ENCODE measurements at regions of chr20 and their contacts with region 1.

Region 1: GRCh38 chr20:35541783-35542588 is at the start of gene ERGIC3:
- DNase-seq: peak; percentile 98
- ATAC-seq: peak; percentile 93
- H3K4me3 ChIP-seq: peak within 1 kb of the TSS; percentile 55 to 94 (median 87)
- H3K4me3 Mint-ChIP-seq: peak within 1 kb of the TSS; percentile 94
- H3K27ac ChIP-seq: peak within 1 kb of the TSS; percentile 63 to 82
- H3K27ac Mint-ChIP-seq: peak within 1 kb of the TSS; percentile 94
- H3K4me1 ChIP-seq: peaks cover 9 to 18% of the 10 kb centered on the region in 2 donors
- H3K4me1 Mint-ChIP-seq: peaks cover 26% of the 10 kb centered on the region
- H3K27me3 ChIP-seq: no peaks in the 10 kb centered on the region
- H3K27me3 Mint-ChIP-seq: no peaks in the 10 kb centered on the region
- CTCF ChIP-seq: no peak
- total RNA-seq, gene ERGIC3: 167 and 191 TPM in 2 replicates

Region 2: DNA sequence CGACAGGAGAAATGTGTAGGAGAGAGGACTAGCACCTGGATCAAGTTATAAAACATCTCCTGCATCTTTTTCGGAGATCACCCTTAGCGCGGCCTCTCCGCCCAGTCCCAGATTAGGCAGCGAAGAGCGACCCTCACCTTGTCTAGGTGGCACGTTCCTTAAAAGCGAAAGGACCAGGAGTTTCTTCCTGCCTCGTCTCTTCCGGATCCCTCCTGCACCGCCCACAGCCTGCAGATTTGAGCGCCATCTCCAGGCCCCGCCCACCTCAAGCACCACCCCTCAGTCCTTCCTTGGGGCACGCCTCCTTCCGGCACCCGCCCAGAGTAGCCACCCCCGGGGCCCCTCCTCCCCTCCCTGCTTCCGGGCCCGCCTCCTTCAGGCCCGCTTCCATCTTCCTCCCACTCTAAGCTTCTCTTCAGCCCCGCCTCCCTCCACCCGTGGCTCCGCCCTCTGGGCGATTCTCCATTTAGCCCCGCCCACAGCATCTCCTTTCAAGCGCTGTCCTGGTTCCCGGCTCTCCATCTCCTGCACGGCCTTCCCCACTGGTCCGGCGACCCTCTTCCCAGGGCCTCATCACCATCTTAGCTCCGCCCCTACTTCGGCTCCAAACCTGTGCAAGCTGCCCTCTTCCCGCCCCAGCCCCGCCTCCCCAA is 1548.9 kb before region 1 on chr20:
- CTCF ChIA-PET with region 1: no interaction called
- POLR2A ChIA-PET with region 1: no interaction called
- intact Hi-C with region 1: loop called (anchors 5 kb)
- DNase-seq: peak; percentile 99
- ATAC-seq: peak; percentile 84
- H3K4me3 ChIP-seq: peak overlapping the region; percentile 94 to 99 (median 98)
- H3K4me3 Mint-ChIP-seq: peak overlapping the region; percentile 92
- H3K27ac ChIP-seq: peak overlapping the region; percentile 90 to 91
- H3K27ac Mint-ChIP-seq: peak overlapping the region; percentile 99
- H3K4me1 ChIP-seq: peaks cover 40 to 48% of the 10 kb centered on the region in 2 donors
- H3K4me1 Mint-ChIP-seq: peaks cover 59% of the 10 kb centered on the region
- H3K27me3 ChIP-seq: no peaks in the 10 kb centered on the region
- H3K27me3 Mint-ChIP-seq: no peaks in the 10 kb centered on the region
- CTCF ChIP-seq: no peak

Region 3: DNA sequence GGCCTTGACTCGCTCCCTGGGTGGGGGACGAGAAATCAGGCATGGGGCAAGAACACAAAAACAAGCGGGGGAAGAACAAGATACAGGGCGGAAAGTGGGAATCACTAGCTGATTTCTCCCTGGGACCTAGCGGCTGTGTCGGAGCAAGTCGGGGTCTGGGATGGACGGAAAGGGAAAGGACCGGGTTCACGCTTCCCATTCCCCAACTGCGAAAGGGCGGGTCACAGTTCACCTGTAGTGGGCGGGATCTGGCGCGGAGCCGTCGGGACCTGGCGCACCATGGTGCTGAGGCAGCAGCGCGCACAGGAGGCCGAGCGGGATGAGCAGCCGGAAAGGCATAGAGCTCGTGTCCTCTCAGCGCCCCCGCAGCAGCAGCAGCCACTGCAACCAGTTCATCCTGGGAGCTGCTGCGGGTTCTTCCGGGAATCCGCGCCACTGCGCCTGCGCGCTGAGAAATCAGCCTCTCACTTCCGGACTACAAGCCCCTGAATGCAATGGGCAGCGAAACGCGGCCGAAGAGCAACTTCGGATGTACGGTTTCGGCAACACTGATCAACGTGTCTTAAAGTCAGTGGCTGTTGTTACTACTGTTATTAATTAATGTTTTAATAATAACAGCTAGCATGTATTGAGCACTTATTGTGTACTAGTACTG is 394.9 kb before region 1 on chr20 and contains the start of gene EDEM2:
- CTCF ChIA-PET with region 1: no interaction called
- POLR2A ChIA-PET with region 1: no interaction called
- intact Hi-C with region 1: loop called (anchors 5 kb)
- DNase-seq: peak; percentile 95
- ATAC-seq: peak; percentile 80
- H3K4me3 ChIP-seq: peak within 1 kb of the TSS; percentile 69 to 94 (median 90)
- H3K4me3 Mint-ChIP-seq: peak within 1 kb of the TSS; percentile 96
- H3K27ac ChIP-seq: peak within 1 kb of the TSS; percentile 79 to 89
- H3K27ac Mint-ChIP-seq: peak within 1 kb of the TSS; percentile 94
- H3K4me1 ChIP-seq: peaks cover 33 to 43% of the 10 kb centered on the region in 2 donors
- H3K4me1 Mint-ChIP-seq: peaks cover 36% of the 10 kb centered on the region
- H3K27me3 ChIP-seq: no peaks in the 10 kb centered on the region
- H3K27me3 Mint-ChIP-seq: no peaks in the 10 kb centered on the region
- CTCF ChIP-seq: no peak
- total RNA-seq, gene EDEM2: 28.1 and 28.6 TPM in 2 replicates

Region 4: GRCh38 chr20:35443003-35443402 is 99.0 kb before region 1 on chr20:
- CTCF ChIA-PET with region 1: no interaction called
- POLR2A ChIA-PET with region 1: no interaction called
- intact Hi-C with region 1: no loop called
- DNase-seq: no peak
- ATAC-seq: no peak
- H3K4me3 ChIP-seq: no peak overlapping the region
- H3K4me3 Mint-ChIP-seq: no peak overlapping the region
- H3K27ac ChIP-seq: no peak overlapping the region
- H3K27ac Mint-ChIP-seq: no peak overlapping the region
- H3K4me1 ChIP-seq: peaks cover 4 to 9% of the 10 kb centered on the region in 2 donors
- H3K4me1 Mint-ChIP-seq: peaks cover 8% of the 10 kb centered on the region
- H3K27me3 ChIP-seq: peaks cover 0 to 8% (median 4%) of the 10 kb centered on the region in 4 experiments
- H3K27me3 Mint-ChIP-seq: peaks cover 21% of the 10 kb centered on the region
- CTCF ChIP-seq: no peak

Region 5: DNA sequence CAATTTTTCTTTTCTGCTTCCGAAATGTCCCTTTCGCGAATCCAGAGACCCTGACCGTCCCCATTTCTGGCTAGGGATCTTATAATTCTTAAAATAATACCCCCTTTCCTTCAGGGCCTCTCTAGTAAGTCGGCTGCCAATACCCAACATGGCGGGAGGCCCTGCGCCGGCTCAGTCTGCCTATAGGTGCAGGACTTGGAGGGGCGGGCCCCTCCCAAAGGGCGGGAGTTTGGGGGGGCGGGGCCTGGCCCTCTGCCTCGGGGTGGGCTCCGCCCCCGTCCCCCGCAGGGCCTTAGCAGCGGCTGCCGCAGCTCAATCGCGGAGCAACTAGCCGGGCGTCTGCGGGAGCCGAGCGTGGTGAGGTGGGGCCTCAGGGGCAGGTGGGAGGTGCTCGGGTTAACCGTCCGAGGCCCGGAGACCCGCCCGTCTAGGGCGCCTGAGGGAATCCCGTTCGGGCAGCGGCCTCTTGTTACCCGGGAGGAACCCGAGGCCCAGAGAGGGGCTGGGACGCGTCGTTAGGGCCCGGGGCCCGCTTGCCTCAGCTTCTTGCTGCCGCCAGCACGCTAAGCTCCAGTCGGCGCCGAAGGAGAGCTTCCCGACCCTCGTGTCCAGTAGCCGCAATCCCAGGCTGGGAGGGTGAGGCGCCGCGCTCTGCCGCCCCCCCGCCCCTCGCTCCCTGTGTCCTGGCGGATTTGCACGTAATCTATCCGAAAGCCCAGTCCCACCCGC is 86.9 kb before region 1 on chr20 and contains the start of gene CEP250:
- CTCF ChIA-PET with region 1: no interaction called
- POLR2A ChIA-PET with region 1: no interaction called
- intact Hi-C with region 1: loop called (anchors 1 kb)
- DNase-seq: peak; percentile 97
- ATAC-seq: peak; percentile 99
- H3K4me3 ChIP-seq: peak within 1 kb of the TSS; percentile 71 to 97 (median 94)
- H3K4me3 Mint-ChIP-seq: peak within 1 kb of the TSS; percentile 87
- H3K27ac ChIP-seq: peak within 1 kb of the TSS; percentile 82 to 97
- H3K27ac Mint-ChIP-seq: peak within 1 kb of the TSS; percentile 97
- H3K4me1 ChIP-seq: peaks cover 0 to 17% of the 10 kb centered on the region in 2 donors
- H3K4me1 Mint-ChIP-seq: peaks cover 16% of the 10 kb centered on the region
- H3K27me3 ChIP-seq: no peaks in the 10 kb centered on the region
- H3K27me3 Mint-ChIP-seq: no peaks in the 10 kb centered on the region
- CTCF ChIP-seq: no peak
- total RNA-seq, gene CEP250: 78.4 and 78.5 TPM in 2 replicates

Region 6: DNA sequence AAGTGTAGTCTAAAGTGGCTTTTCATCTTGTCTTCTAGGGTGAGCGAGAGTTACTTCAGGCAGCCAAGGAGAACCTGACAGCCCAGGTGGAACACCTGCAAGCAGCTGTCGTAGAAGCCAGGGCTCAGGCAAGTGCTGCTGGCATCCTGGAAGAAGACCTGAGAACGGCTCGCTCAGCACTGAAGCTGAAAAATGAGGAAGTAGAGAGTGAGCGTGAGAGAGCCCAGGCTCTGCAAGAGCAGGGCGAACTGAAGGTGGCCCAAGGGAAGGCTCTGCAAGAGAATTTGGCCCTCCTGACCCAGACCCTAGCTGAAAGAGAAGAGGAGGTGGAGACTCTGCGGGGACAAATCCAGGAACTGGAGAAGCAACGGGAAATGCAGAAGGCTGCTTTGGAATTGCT is 39.6 kb before region 1 on chr20:
- CTCF ChIA-PET with region 1: interaction called, 6 read pairs
- POLR2A ChIA-PET with region 1: no interaction called
- intact Hi-C with region 1: loop called (anchors 1 kb)
- DNase-seq: peak; percentile 86
- ATAC-seq: peak; percentile 94
- H3K4me3 ChIP-seq: no peak overlapping the region
- H3K4me3 Mint-ChIP-seq: peak overlapping the region; percentile 54
- H3K27ac ChIP-seq: peak overlapping the region in 1 of 2 donors; percentile 68
- H3K27ac Mint-ChIP-seq: peak overlapping the region; percentile 84
- H3K4me1 ChIP-seq: peaks cover 44 to 53% of the 10 kb centered on the region in 2 donors
- H3K4me1 Mint-ChIP-seq: peaks cover 57% of the 10 kb centered on the region
- H3K27me3 ChIP-seq: no peaks in the 10 kb centered on the region
- H3K27me3 Mint-ChIP-seq: no peaks in the 10 kb centered on the region
- CTCF ChIP-seq: no peak

Region 7: GRCh38 chr20:35527122-35527769 is 14.7 kb before region 1 on chr20:
- CTCF ChIA-PET with region 1: no interaction called
- POLR2A ChIA-PET with region 1: no interaction called
- intact Hi-C with region 1: no loop called
- DNase-seq: no peak
- ATAC-seq: no peak
- H3K4me3 ChIP-seq: no peak overlapping the region
- H3K4me3 Mint-ChIP-seq: no peak overlapping the region
- H3K27ac ChIP-seq: no peak overlapping the region
- H3K27ac Mint-ChIP-seq: no peak overlapping the region
- H3K4me1 ChIP-seq: no peaks in the 10 kb centered on the region
- H3K4me1 Mint-ChIP-seq: no peaks in the 10 kb centered on the region
- H3K27me3 ChIP-seq: no peaks in the 10 kb centered on the region
- H3K27me3 Mint-ChIP-seq: no peaks in the 10 kb centered on the region
- CTCF ChIP-seq: no peak

Region 8: DNA sequence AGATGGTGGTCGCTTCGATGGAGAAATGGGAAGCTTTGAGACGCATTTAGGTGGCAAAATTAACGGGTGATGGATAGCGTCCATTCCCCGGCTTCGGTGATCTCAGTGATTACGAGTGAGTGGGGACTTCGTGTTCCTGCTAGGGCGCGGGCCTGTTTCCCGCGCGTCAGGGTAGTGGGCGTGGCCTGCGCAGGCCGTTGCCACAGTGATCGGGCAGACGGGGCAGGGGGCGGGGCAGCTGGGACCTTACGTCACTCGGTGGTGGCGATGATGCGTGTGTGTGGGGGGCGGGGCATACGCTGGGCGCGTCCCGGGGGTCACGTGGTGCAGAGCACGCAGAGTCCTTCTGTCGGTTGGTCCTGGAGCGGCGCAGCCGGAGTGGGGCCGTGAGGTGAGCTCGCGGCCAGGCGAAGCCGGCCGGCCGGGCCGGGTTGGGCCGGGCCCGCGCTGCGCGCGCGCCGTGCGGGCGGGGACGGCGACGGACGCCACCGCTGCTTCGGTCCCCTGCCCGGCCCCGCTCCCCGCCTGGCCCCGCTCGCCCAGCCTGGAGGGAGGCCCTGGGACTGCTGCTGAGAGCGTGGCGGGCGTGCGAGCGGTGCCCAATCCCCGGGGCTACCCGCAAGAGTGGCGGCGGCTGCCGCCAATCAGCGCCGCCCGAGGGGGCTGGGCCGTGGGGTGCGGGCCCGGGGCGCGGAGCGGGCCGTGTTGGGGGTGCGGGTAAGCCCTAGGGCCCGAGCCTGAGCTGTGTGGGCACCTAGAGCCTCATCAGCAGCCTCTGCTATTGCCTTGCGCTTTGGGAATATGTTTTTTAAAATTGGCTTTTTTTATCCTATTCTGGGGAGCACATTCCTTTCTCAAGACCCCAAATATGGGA is 229.9 kb after region 1 on chr20 and contains the start of gene PHF20:
- CTCF ChIA-PET with region 1: no interaction called
- POLR2A ChIA-PET with region 1: no interaction called
- intact Hi-C with region 1: loop called (anchors 5 kb)
- DNase-seq: peak; percentile 100
- ATAC-seq: peak; percentile 80
- H3K4me3 ChIP-seq: peak within 1 kb of the TSS; percentile 67 to 98 (median 89)
- H3K4me3 Mint-ChIP-seq: peak within 1 kb of the TSS; percentile 88
- H3K27ac ChIP-seq: peak within 1 kb of the TSS; percentile 95 to 99
- H3K27ac Mint-ChIP-seq: peak within 1 kb of the TSS; percentile 99
- H3K4me1 ChIP-seq: peaks cover 80 to 88% of the 10 kb centered on the region in 2 donors
- H3K4me1 Mint-ChIP-seq: peaks cover 72% of the 10 kb centered on the region
- H3K27me3 ChIP-seq: no peaks in the 10 kb centered on the region
- H3K27me3 Mint-ChIP-seq: no peaks in the 10 kb centered on the region
- CTCF ChIP-seq: no peak
- total RNA-seq, gene PHF20: 92.3 and 101 TPM in 2 replicates

Measured in B cell (primary cell).